ENCODE measurements at regions of chr1 and their contacts with region 1.

Region 1: DNA sequence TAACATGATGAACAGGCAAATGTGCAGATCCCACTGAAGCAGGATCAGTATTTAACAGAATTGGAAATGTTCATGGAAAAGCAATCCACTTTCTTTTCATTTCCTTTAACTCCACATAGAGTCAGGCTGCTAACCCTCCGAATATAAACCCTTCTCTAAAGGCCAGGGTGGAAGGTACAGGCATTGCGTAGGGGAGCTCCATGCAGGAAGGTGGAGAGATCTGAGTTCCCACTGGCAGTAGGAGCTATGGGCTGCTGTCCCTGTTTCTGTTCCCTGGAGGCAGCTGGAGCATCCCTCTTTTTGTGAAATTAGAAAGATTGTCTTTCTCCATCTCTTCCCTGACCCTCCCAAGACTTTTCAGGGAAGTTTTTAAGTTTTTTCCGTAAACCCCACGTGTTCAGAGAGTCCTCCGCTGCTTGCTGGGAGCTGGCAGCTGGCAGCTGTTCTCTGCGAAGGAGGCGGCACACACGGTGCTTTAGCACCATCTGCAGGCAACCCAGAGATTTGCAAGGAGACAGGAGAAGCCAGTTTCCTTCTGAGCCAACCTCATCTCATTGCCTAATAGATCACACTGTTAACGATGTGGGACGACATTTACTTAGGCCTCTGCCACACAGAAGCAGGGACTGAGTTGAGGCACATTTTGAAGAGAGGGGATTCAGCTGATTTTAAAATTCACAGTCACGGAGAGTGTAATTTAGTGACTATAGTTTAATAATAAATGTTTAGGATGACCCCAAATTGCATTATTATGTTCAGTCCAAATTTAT is 55.4 kb upstream of the HOOK1 start:
- DNase-seq: peak; percentile 82
- ATAC-seq: peak; percentile 95
- H3K4me3 ChIP-seq: peak overlapping the region; percentile 45; the same call in 1 of the 2 replicates
- H3K27ac ChIP-seq: no peak overlapping the region
- H3K4me1 ChIP-seq: 0 out of 2 replicates have a peak, but pooled peaks cover 5% of the 10 kb centered on the region
- H3K27me3 ChIP-seq: no peaks in the 10 kb centered on the region
- CTCF ChIP-seq: peak; percentile 95

Region 2: DNA sequence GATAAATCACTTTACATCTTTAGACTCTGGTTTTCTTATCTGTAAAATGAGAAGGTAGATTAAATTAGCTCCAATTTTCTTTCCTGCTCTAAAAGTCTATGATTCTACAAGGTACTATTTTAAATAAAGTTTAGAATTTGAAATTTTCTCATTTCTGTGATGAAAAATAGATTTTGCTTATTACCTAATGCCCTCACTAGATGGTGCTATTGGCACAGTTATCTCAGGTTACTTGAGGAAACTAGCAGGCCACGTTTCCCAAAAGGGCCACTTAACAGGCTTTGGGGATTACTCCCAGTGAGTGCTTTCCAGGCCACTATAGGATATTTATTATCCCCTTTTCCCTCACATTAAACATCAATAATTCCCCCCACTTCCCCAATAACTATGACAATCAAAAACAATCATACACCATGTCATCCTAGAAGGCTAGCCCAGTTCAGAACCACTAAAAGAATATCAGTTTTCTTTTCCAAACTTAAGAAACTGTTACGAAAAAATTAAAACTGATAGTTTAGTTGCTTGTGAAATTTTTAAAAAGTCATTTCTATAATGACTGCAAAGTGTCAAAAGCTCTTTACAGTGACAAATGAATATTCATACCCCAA is 1243.4 kb before region 1 on chr1:
- CTCF ChIA-PET with region 1: no interaction called
- POLR2A ChIA-PET with region 1: no interaction called
- intact Hi-C with region 1: loop called (anchors 2 kb)
- DNase-seq: peak; percentile 81
- ATAC-seq: peak; percentile 63; the same call in 1 of the 2 replicates
- H3K4me3 ChIP-seq: no peak overlapping the region
- H3K27ac ChIP-seq: no peak overlapping the region
- H3K4me1 ChIP-seq: no peaks in the 10 kb centered on the region
- H3K27me3 ChIP-seq: no peaks in the 10 kb centered on the region
- CTCF ChIP-seq: peak; percentile 82

Region 3: DNA sequence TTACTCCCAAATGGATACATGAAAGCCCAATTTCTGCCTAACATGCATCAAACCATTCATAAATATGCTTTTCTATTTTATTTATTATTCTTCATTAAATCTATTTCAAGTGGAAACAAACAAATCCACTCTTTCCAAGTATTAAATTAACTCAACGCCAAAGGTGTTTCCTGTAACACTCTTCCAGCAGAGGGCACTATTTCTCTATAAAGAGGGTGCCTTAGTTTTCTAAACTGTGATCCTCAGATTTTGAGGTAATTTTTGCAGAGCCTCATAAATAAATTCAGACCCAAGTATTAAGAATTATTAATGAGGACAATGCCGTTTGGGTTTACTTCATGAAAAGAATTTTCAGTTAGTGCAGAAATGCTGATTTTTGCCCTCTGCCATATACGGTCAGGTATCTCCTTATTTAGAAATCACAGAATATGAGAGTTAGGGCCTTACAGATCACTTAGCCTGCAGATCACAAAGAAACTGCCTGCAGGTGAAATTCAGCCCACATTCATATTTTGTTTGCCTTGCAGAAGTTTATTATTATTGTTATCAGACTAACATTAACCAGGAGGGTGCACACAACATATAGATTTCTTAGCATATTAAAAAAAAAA is 1019.4 kb before region 1 on chr1:
- CTCF ChIA-PET with region 1: no interaction called
- POLR2A ChIA-PET with region 1: no interaction called
- intact Hi-C with region 1: loop called (anchors 1 kb)
- DNase-seq: peak; percentile 89
- ATAC-seq: peak; percentile 77
- H3K4me3 ChIP-seq: no peak overlapping the region
- H3K27ac ChIP-seq: no peak overlapping the region
- H3K4me1 ChIP-seq: no peaks in the 10 kb centered on the region
- H3K27me3 ChIP-seq: no peaks in the 10 kb centered on the region
- CTCF ChIP-seq: peak; percentile 95

Region 4: DNA sequence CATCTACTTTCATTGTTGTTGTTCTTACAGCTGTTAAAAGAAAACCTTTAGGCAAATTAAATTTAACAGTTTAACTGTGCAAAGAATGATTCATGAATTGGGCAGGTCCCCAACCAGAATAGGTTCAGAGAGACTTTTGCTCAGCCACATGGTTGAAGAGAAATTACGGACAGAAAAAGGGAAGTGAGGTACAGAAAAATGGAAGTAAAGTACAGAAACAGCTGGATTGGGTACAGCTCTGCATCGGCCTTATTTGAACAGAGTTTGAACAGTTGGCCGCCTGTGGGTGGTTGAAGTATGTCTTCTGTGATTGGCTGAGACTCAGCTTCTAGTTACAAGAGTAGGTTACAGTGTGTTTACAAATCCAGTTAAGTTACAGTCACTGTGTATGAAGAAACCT is 252.4 kb before region 1 on chr1:
- CTCF ChIA-PET with region 1: no interaction called
- POLR2A ChIA-PET with region 1: no interaction called
- intact Hi-C with region 1: no loop called
- DNase-seq: peak; percentile 64
- ATAC-seq: peak; percentile 94
- H3K4me3 ChIP-seq: 0 out of 2 replicates have a peak overlapping the region, but pooled peaks have one; percentile 3
- H3K27ac ChIP-seq: peak overlapping the region; percentile 52
- H3K4me1 ChIP-seq: peaks cover 19% of the 10 kb centered on the region
- H3K27me3 ChIP-seq: no peaks in the 10 kb centered on the region
- CTCF ChIP-seq: no peak

Measured in PC-3 (cell line).